ENCODE measurements at regions of chr4 and their contacts with region 1.

Region 1: GRCh38 chr4:128809477-128810330 is at the start of gene JADE1:
- DNase-seq: peak; percentile 79
- ATAC-seq: peak; percentile 78
- H3K4me3 ChIP-seq: peak within 1 kb of the TSS; percentile 66 to 85
- H3K27ac ChIP-seq: peak within 1 kb of the TSS; percentile 92
- H3K4me1 ChIP-seq: peaks cover 8% of the 10 kb centered on the region
- H3K27me3 ChIP-seq: no peaks in the 10 kb centered on the region
- CTCF ChIP-seq: peak; percentile 78
- total RNA-seq, gene JADE1: 23.4 TPM

Region 2: DNA sequence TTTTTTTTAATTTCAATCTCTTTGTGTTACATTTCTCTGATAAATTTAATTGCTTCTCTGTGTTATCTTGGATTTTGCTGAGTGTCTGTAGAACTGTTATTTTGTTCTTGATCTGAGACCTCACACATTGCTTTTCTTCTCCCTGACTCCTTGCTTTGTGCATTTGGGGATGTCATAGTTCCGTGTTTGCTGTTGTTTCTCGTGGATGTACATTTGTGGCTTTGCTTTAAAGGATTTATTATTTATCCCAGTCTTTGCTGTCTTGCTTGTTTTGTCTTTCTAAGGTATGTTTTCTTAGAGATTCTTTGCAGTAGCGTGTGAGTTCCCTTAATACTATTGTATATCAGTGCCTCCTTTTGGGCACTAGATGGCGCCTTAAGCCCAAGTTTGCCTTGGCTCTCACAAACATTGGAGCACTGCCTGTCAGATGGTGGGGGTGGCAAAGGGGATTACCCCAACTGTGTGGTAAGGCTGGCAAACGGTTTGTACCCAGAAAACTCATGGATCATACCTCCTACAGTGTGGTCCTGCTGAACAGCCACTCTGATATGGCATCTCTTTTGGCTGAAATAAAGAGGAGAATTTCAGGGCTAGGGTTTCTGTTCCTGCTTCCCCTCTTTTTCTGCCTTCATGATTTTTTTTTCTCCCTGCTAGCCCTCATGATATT is 618.5 kb before region 1 on chr4:
- CTCF ChIA-PET with region 1: interaction called, 16 read pairs
- POLR2A ChIA-PET with region 1: no interaction called
- in situ Hi-C with region 1: no loop called
- intact Hi-C with region 1: no loop called
- DNase-seq: peak; percentile 36
- ATAC-seq: peak; percentile 93
- H3K4me3 ChIP-seq: no peak overlapping the region
- H3K27ac ChIP-seq: no peak overlapping the region
- H3K4me1 ChIP-seq: no peaks in the 10 kb centered on the region
- H3K27me3 ChIP-seq: no peaks in the 10 kb centered on the region
- CTCF ChIP-seq: peak; percentile 84

Region 3: GRCh38 chr4:128358231-128358912 is 451.3 kb before region 1 on chr4:
- CTCF ChIA-PET with region 1: no interaction called
- POLR2A ChIA-PET with region 1: interaction called, 10 read pairs
- in situ Hi-C with region 1: no loop called
- intact Hi-C with region 1: no loop called
- DNase-seq: no peak
- ATAC-seq: no peak
- H3K4me3 ChIP-seq: no peak overlapping the region
- H3K27ac ChIP-seq: no peak overlapping the region
- H3K4me1 ChIP-seq: peaks cover 7% of the 10 kb centered on the region
- H3K27me3 ChIP-seq: no peaks in the 10 kb centered on the region
- CTCF ChIP-seq: no peak

Region 4: DNA sequence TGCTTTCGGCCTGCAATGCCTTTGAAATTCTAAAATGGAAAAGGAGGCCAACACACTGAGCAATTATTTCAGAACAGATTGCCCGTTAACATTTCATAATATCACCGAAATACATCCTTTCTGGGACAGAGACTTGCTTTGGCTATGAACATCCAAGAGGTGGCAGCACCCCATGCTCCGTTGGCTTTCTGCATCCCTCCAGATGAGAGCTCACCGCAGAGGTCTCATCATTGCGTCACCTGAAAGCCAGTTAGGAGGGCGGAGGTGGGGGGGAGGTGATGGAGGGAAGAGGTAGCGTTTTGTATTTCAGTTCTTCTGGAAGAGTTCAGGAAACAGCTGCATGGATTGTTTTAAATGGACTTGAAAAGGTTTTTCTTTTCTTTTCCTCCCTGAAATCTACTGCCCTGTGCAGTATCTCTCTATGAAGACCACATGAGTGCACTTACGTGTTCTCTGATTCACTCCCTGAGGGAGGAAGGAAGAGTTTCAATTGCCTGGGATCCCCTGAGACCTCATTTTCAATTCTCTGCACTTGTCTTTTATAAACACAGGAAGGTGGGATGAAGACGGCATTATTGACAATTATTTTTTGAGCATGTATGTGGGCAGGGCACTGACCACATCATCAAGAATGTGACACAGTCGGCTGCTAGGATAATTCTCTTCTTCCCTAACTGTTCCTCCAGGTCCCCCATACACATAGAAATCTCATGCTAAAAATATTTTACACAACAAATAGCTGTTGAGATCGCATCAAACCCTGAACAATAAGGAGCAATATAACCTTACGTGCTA is 355.2 kb before region 1 on chr4:
- CTCF ChIA-PET with region 1: no interaction called
- POLR2A ChIA-PET with region 1: no interaction called
- in situ Hi-C with region 1: no loop called
- intact Hi-C with region 1: loop called (anchors 10 kb)
- DNase-seq: peak; percentile 63
- ATAC-seq: peak; percentile 93
- H3K4me3 ChIP-seq: no peak overlapping the region
- H3K27ac ChIP-seq: peak overlapping the region; percentile 46; the same call in 1 of the 2 replicates
- H3K4me1 ChIP-seq: no peaks in the 10 kb centered on the region
- H3K27me3 ChIP-seq: no peaks in the 10 kb centered on the region
- CTCF ChIP-seq: peak; percentile 82

Region 5: DNA sequence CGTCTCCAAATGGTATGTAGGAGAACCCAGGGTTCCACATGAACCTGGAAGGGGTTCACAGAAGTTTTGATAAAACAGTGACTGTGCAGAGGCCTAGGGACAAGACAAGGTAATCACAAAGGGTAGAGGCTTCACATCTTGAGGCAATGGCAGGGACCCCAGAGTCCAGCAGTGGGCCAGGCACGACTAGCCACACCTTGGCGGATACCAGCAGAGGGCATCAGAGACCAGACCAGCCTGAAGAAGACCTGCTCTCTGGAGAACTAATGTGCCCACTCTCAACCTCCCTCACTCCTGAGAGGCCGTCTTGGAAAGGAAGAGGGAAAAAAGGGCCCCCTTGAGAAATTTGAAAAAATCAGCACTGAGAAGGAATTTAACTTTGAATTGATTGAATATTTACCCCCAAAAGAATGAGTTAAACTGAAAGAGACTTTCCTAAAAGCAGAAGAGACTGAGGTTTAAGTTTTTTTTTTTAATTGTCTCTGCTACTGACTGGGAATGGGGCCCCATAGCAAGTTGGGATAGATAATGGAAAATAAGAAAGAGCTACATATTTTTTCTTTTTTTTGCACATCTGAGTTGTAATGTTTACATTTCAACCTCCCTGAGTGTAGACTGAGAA is 244.0 kb before region 1 on chr4:
- CTCF ChIA-PET with region 1: no interaction called
- POLR2A ChIA-PET with region 1: no interaction called
- in situ Hi-C with region 1: no loop called
- intact Hi-C with region 1: loop called (anchors 5 kb)
- DNase-seq: no peak
- ATAC-seq: peak; percentile 88
- H3K4me3 ChIP-seq: no peak overlapping the region
- H3K27ac ChIP-seq: no peak overlapping the region
- H3K4me1 ChIP-seq: no peaks in the 10 kb centered on the region
- H3K27me3 ChIP-seq: no peaks in the 10 kb centered on the region
- CTCF ChIP-seq: peak; percentile 79

Region 6: DNA sequence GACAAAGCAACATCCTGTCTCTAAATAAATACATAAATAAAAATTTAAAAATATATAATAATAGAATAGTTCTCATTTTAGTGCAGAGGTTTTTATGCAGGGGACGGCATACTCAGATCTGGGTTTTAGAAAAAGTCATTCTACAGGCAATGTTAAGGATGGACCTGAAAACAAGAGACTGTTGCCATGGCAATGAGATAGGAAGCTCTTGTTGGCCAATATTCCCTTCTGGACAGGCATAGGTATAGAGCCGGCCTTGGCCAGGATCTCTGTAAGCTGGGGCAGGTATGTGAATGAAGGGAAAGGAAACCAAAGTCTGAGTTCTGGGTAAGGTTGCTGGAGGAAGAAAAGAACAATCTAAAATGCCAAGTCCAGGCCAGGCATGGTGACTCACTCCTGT is 187.6 kb before region 1 on chr4:
- CTCF ChIA-PET with region 1: interaction called, 11 read pairs
- POLR2A ChIA-PET with region 1: no interaction called
- in situ Hi-C with region 1: no loop called
- intact Hi-C with region 1: no loop called
- DNase-seq: no peak
- ATAC-seq: no peak
- H3K4me3 ChIP-seq: no peak overlapping the region
- H3K27ac ChIP-seq: no peak overlapping the region
- H3K4me1 ChIP-seq: no peaks in the 10 kb centered on the region
- H3K27me3 ChIP-seq: no peaks in the 10 kb centered on the region
- CTCF ChIP-seq: no peak

Region 7: GRCh38 chr4:128823025-128823661 is 13.4 kb after region 1 on chr4:
- CTCF ChIA-PET with region 1: interaction called, 7 read pairs
- POLR2A ChIA-PET with region 1: interaction called, 15 read pairs
- in situ Hi-C with region 1: no loop called
- intact Hi-C with region 1: no loop called
- DNase-seq: peak; percentile 57
- ATAC-seq: peak; percentile 75
- H3K4me3 ChIP-seq: no peak overlapping the region
- H3K27ac ChIP-seq: no peak overlapping the region
- H3K4me1 ChIP-seq: peaks cover 12% of the 10 kb centered on the region
- H3K27me3 ChIP-seq: no peaks in the 10 kb centered on the region
- CTCF ChIP-seq: no peak